Endothelial cell of umbilical vein (primary cell): ENCODE measurements at regions of chr9 and their contacts with region 1.

Region 1: DNA sequence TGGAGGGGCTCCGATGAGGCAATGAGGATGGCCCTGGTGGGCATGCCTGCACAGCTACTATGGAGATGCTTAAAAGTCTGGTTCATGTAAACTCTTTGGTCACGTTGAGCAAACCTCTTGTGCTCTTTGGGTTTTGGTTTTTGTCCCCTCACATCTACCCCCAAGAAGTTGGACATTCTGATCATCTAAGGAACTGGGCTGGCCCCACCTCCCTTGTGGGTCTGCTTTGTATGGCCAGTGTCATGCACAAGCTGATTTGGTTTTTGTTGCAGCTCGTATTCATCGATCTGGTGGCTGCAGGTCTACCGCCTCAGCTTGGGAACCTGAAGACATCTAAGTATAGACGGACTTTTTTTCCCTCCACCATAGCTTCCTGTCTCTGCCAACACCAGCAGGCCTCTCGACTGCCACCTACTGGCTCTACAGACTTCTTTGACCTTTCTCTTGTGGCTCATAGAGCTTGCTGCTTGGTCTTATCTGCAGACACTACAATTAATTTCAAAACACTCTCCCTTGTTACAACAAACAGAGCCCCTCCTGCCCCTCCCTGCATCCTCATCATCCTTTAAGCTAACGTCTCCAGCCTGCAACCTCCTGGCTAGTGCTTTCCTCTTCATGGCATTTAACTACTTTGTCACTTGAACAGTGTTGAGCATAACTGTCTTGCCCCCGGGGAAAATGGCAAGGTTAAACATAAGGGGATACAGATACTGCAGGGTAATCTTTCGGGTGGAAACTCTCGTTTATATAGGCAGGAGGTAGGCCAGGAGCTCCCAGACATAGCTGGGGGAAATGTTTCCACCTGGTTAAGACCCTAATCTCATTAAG is 34.5 kb downstream of the TSTD2 start:
- DNase-seq: peak; percentile 82
- H3K4me3 ChIP-seq: no peak overlapping the region
- H3K27ac ChIP-seq: no peak overlapping the region
- H3K4me1 ChIP-seq: no peaks in the 10 kb centered on the region
- H3K27me3 ChIP-seq: peaks cover 0 to 4% of the 10 kb centered on the region in 2 experiments
- CTCF ChIP-seq: peak; percentile 90 to 91
- POLR2A ChIP-seq: no peak

Region 2: DNA sequence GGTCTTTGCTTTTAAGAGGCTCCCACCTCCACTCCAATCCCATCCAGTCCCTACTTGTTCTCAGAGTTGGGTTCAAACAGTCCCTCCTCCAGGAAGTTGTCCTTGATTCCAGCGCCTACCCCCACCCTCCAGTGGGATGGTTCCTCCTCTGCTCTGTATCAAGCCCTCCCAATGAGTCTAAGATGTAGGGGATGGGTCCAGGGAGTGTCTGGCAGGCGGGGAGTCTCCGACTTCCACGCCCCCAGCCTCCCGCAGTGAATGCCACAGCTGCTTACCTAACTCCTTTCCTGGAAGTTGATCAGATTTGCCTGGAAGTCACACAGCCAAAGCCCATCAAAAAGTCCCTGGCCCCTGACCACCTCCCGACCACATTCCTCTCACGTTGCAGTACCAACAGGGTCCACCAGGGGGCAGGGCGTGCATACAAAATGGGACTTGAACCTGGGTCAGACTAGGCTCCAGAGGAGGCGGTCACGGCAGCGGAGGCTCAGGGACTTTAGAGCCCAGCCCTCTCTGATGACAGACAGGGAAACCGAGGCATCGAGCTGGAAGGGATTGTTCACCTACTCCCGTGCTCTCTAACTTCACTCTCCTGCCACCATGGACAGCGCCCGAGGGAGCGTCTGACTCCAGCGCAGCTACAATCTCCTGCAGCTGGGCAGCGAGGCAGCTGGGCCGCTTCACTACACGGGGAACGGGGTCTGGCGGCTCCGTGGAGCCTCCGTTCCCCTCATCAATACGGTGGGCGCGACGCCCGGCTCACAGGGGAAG is 211.8 kb before region 1 on chr9:
- CTCF ChIA-PET with region 1: interaction called, 10 read pairs
- POLR2A ChIA-PET with region 1: no interaction called
- dilution Hi-C with region 1: no loop called
- intact Hi-C with region 1: loop called (anchors 1 kb)
- DNase-seq: peak; percentile 63
- H3K4me3 ChIP-seq: no peak overlapping the region
- H3K27ac ChIP-seq: no peak overlapping the region
- H3K4me1 ChIP-seq: no peaks in the 10 kb centered on the region
- H3K27me3 ChIP-seq: no peaks in the 10 kb centered on the region
- CTCF ChIP-seq: peak; percentile 97 to 98
- POLR2A ChIP-seq: no peak

Region 3: GRCh38 chr9:97440160-97440559 is 158.5 kb before region 1 on chr9:
- CTCF ChIA-PET with region 1: interaction called, 14 read pairs
- POLR2A ChIA-PET with region 1: no interaction called
- dilution Hi-C with region 1: no loop called
- intact Hi-C with region 1: no loop called
- DNase-seq: no peak
- H3K4me3 ChIP-seq: no peak overlapping the region
- H3K27ac ChIP-seq: no peak overlapping the region
- H3K4me1 ChIP-seq: no peaks in the 10 kb centered on the region
- H3K27me3 ChIP-seq: no peaks in the 10 kb centered on the region
- CTCF ChIP-seq: no peak
- POLR2A ChIP-seq: no peak

Region 4: GRCh38 chr9:97479496-97480159 is 119.0 kb before region 1 on chr9:
- CTCF ChIA-PET with region 1: interaction called, 775 read pairs
- POLR2A ChIA-PET with region 1: no interaction called
- dilution Hi-C with region 1: loop called (anchors 25 kb)
- intact Hi-C with region 1: no loop called
- DNase-seq: no peak
- H3K4me3 ChIP-seq: no peak overlapping the region
- H3K27ac ChIP-seq: no peak overlapping the region
- H3K4me1 ChIP-seq: no peaks in the 10 kb centered on the region
- H3K27me3 ChIP-seq: no peaks in the 10 kb centered on the region
- CTCF ChIP-seq: no peak
- POLR2A ChIP-seq: no peak

Region 5: GRCh38 chr9:97510797-97511761 is 87.6 kb before region 1 on chr9:
- CTCF ChIA-PET with region 1: interaction called, 28 read pairs
- POLR2A ChIA-PET with region 1: no interaction called
- dilution Hi-C with region 1: no loop called
- intact Hi-C with region 1: loop called (anchors 2 kb)
- DNase-seq: peak; percentile 94
- H3K4me3 ChIP-seq: no peak overlapping the region
- H3K27ac ChIP-seq: peak overlapping the region; percentile 49
- H3K4me1 ChIP-seq: peaks cover 13% of the 10 kb centered on the region
- H3K27me3 ChIP-seq: peaks cover 9 to 12% of the 10 kb centered on the region in 2 experiments
- CTCF ChIP-seq: no peak
- POLR2A ChIP-seq: no peak

Region 6: GRCh38 chr9:97543565-97543964 is 55.1 kb before region 1 on chr9:
- CTCF ChIA-PET with region 1: interaction called, 30 read pairs
- POLR2A ChIA-PET with region 1: no interaction called
- dilution Hi-C with region 1: no loop called
- intact Hi-C with region 1: no loop called
- DNase-seq: no peak
- H3K4me3 ChIP-seq: no peak overlapping the region
- H3K27ac ChIP-seq: no peak overlapping the region
- H3K4me1 ChIP-seq: no peaks in the 10 kb centered on the region
- H3K27me3 ChIP-seq: peaks cover 0 to 4% of the 10 kb centered on the region in 2 experiments
- CTCF ChIP-seq: no peak
- POLR2A ChIP-seq: no peak

Region 7: GRCh38 chr9:97615439-97616072 is 16.9 kb after region 1 on chr9:
- CTCF ChIA-PET with region 1: interaction called, 99 read pairs
- POLR2A ChIA-PET with region 1: no interaction called
- dilution Hi-C with region 1: no loop called
- intact Hi-C with region 1: loop called (anchors 1 kb)
- DNase-seq: peak; percentile 77
- H3K4me3 ChIP-seq: no peak overlapping the region
- H3K27ac ChIP-seq: no peak overlapping the region
- H3K4me1 ChIP-seq: no peaks in the 10 kb centered on the region
- H3K27me3 ChIP-seq: no peaks in the 10 kb centered on the region
- CTCF ChIP-seq: peak; percentile 62 to 68
- POLR2A ChIP-seq: no peak

Region 8: DNA sequence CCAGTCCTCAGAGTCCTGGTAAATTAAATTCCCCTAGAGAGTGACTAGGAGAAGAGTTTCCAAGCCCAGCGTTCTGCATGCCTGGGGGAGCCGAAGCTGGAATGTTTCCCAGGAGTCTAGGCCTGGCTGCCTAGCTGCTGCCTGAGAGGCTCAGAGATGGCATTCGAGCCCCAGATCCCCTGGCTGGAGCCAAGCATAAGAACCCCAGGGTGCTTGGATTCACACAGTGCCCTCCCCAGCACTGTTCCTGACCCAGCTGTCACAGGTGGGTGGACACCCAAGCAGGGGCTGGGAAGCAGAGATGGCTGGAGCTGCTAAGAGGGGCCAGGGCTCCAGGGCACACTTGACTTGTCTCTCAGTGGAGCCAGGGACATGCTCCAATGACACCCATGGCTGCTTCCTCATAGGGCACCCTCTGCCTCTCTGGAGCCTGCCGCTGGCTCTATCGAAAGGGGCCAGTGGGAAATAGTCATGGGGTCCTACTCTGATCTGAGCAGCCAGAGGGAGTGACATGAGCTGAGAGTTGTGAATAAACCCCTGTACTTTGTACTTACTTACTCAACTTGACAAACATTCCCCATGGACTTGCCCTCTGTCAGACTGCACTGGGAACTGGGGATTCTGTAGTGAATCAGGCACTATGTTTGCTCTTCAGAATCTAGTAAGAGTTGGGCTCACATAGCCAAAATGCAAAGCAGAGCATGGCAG is 161.1 kb after region 1 on chr9:
- CTCF ChIA-PET with region 1: no interaction called
- POLR2A ChIA-PET with region 1: no interaction called
- dilution Hi-C with region 1: no loop called
- intact Hi-C with region 1: no loop called
- DNase-seq: no peak
- H3K4me3 ChIP-seq: no peak overlapping the region
- H3K27ac ChIP-seq: no peak overlapping the region
- H3K4me1 ChIP-seq: no peaks in the 10 kb centered on the region
- H3K27me3 ChIP-seq: peaks cover 6% of the 10 kb centered on the region in 2 experiments
- CTCF ChIP-seq: no peak
- POLR2A ChIP-seq: no peak